MCF 10A (cell line): ENCODE measurements at regions of chr12 and their contacts with region 1.

Region 1: GRCh38 chr12:107679336-107679735 is 6.3 kb upstream of the PWP1 start:
- DNase-seq: no peak
- H3K4me3 Mint-ChIP-seq: no peak overlapping the region
- H3K27ac Mint-ChIP-seq: no peak overlapping the region
- H3K4me1 Mint-ChIP-seq: peaks cover under 1% of the 10 kb centered on the region
- H3K27me3 Mint-ChIP-seq: peaks cover 28% of the 10 kb centered on the region
- CTCF ChIP-seq: no peak

Region 2: DNA sequence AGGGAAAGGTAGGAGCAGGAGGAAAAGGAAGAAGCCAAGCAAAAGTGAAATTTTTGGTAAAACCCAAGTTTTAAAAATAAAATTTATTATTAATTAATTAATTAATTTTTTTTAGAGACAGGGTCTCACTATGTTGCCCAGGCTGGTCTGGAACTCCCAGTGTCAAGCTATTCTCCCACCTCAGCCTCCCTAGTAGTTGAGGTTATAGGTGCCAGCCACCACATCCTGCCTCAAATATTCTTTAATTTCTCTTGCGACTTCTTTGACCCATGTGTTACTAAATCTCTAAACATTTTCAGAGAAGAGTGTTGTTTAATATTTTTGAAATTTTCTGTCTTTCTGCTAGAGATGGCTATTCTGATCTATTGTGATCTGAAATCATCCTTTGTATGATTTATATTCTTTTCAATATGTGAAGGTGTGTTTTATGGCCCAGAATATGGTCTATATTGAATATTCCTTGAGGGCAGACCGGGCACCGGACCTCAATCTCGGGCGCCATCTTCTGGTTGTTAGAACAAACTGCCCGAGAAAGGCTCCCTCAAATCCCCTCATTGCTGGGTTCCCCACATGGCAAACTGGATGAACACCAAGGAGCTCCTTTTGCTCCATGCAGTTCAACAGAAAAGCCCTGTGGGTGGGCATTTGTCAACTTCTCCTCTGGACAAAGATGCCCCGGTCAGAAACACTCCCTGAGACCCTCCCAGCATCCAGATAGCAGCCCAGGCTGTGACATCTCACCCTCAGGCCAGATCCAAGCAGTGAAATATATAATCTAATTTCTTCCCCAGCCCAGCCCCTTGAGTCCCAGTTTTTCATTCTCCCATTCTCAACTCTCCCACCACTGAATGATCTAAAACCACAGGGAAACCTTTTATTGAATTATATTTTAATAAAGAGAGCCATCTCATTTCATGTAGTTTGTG is 205.7 kb after region 1 on chr12:
- CTCF ChIA-PET with region 1: interaction called, 85 read pairs
- POLR2A ChIA-PET with region 1: no interaction called
- intact Hi-C with region 1: loop called (anchors 1 kb)
- DNase-seq: peak; percentile 64
- H3K4me3 Mint-ChIP-seq: no peak overlapping the region
- H3K27ac Mint-ChIP-seq: no peak overlapping the region
- H3K4me1 Mint-ChIP-seq: no peaks in the 10 kb centered on the region
- H3K27me3 Mint-ChIP-seq: peaks cover 23% of the 10 kb centered on the region
- CTCF ChIP-seq: peak; percentile 72

Region 3: DNA sequence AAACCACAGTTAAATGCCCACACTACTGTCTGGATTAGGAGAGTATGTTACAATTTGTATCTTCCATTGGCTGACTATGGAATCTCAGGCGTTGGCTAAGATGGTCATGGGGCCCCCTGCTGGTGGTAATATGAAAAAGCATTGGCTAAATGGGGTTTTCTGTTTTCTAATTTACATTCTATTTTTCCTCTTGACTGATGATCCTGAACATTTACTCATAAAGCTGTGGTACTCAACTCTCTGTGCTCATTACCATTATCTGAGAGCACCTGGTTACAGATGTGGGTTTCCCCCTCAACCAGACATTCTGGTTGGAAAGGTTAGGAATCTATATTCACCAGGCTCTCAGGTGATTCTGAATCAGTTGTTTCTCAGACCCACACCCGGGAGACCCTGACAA is 514.6 kb after region 1 on chr12:
- CTCF ChIA-PET with region 1: no interaction called
- POLR2A ChIA-PET with region 1: no interaction called
- intact Hi-C with region 1: loop called (anchors 5 kb)
- DNase-seq: peak; percentile 45
- H3K4me3 Mint-ChIP-seq: no peak overlapping the region
- H3K27ac Mint-ChIP-seq: no peak overlapping the region
- H3K4me1 Mint-ChIP-seq: no peaks in the 10 kb centered on the region
- H3K27me3 Mint-ChIP-seq: no peaks in the 10 kb centered on the region
- CTCF ChIP-seq: peak; percentile 38